ENCODE measurements at regions of chr6 and their contacts with region 1.

Region 1: DNA sequence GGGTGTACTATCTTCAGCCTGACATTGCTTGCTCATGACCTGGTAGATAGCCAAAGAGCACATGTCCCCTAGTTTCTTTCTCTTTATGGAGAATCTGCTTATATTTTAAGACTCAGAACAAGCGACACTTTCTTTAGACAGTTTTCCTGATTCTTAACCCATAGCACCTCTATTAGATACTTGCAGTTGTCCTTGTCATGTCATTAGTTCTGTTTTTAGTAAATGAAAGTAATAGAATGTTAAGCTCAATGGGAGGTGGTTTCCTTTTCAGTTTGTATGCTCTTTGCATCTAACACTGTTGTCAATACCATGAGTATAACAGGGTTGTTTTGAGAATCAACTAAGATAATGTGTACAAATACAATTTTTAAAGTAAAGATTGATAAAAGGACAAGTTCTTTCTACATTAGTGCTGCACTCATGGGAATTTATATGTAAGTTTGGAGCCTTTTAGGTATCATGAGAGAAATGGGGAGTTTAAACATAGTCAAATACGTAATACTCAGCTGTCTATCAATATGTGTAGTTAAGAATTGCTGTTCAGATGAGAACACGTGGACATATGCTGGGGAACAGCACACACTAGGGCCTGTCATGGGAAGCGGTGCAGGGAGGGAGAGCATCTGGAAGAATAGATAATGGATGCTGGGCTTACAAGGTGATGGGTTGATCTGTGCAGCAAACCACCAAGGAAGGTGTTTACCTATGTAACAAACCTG is 124.3 kb downstream of the GRM1 start:
- DNase-seq: no peak
- ATAC-seq: no peak
- H3K4me3 ChIP-seq: no peak overlapping the region
- H3K27ac ChIP-seq: no peak overlapping the region
- H3K4me1 ChIP-seq: no peaks in the 10 kb centered on the region
- H3K27me3 ChIP-seq: no peaks in the 10 kb centered on the region
- CTCF ChIP-seq: no peak

Region 2: DNA sequence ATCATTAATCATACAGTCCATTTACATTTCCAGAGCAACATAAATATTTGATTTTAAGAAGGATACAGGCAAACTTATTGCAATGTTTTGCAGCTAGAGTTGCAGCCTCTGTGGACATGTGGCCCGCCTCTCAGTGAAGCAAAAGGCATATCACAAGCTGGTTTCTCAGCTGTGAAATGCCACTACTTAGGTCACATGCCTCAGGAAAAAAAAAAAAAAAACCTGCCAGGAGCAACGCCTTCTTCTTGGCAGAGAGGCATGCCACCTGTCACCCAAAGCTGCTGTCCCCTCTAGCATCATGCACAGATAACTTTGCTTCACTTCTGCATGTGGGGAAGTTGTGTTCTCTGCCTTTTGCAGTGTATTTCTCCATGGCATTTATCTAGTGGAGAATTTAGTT is 105.8 kb before region 1 on chr6:
- intact Hi-C with region 1: no loop called
- DNase-seq: no peak
- ATAC-seq: no peak
- H3K4me3 ChIP-seq: no peak overlapping the region
- H3K27ac ChIP-seq: no peak overlapping the region
- H3K4me1 ChIP-seq: no peaks in the 10 kb centered on the region
- H3K27me3 ChIP-seq: peaks cover 0 to 3% (median 0%) of the 10 kb centered on the region in 7 donors
- CTCF ChIP-seq: no peak

Region 3: GRCh38 chr6:146200176-146200575 is 47.0 kb after region 1 on chr6:
- intact Hi-C with region 1: no loop called
- DNase-seq: no peak
- ATAC-seq: no peak
- H3K4me3 ChIP-seq: no peak overlapping the region
- H3K27ac ChIP-seq: no peak overlapping the region
- H3K4me1 ChIP-seq: no peaks in the 10 kb centered on the region
- H3K27me3 ChIP-seq: no peaks in the 10 kb centered on the region
- CTCF ChIP-seq: no peak

Region 4: GRCh38 chr6:147909640-147910039 is 1756.4 kb after region 1 on chr6:
- intact Hi-C with region 1: loop called in 1 of 10 experiments (anchors 5 kb)
- DNase-seq: no peak
- ATAC-seq: no peak
- H3K4me3 ChIP-seq: no peak overlapping the region
- H3K27ac ChIP-seq: no peak overlapping the region
- H3K4me1 ChIP-seq: no peaks in the 10 kb centered on the region
- H3K27me3 ChIP-seq: no peaks in the 10 kb centered on the region
- CTCF ChIP-seq: no peak

Measured in heart right ventricle (tissue), 16 donors.